GM10248 (cell line): ENCODE measurements at regions of chr3 and their contacts with region 1.

Region 1: DNA sequence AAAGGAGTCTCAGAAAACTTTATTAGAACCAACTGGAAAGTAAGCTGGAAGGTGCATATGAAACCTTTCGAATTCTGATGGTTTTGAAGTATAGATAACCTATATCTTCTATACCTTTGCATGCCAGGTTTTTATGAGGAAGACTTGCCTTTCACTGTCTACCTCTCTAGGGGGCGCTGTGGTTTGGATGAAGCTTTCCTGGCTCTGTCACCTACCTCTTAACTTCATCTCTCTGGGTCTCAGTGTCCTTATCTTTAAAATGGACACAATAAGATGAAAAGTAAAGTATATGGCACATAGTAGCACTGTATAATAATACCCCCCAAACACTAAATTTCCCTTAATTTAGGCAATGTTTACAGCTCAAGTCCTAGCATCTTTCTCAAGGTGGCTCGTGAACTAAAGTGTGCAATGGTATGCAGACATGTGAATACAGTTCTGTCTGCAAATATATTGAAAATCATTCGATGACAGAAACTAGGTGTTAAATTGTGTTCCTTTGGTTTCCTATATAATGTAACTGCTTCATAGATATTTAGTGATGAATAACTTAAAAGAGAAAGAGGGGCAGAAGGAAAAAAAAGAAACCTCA is 314.3 kb downstream of the CHST2 start:
- DNase-seq: peak; percentile 29
- CTCF ChIP-seq: peak; percentile 41

Region 2: GRCh38 chr3:143031327-143031726 is 402.6 kb before region 1 on chr3:
- CTCF ChIA-PET with region 1: no interaction called
- POLR2A ChIA-PET with region 1: no interaction called
- DNase-seq: no peak
- CTCF ChIP-seq: no peak

Region 3: DNA sequence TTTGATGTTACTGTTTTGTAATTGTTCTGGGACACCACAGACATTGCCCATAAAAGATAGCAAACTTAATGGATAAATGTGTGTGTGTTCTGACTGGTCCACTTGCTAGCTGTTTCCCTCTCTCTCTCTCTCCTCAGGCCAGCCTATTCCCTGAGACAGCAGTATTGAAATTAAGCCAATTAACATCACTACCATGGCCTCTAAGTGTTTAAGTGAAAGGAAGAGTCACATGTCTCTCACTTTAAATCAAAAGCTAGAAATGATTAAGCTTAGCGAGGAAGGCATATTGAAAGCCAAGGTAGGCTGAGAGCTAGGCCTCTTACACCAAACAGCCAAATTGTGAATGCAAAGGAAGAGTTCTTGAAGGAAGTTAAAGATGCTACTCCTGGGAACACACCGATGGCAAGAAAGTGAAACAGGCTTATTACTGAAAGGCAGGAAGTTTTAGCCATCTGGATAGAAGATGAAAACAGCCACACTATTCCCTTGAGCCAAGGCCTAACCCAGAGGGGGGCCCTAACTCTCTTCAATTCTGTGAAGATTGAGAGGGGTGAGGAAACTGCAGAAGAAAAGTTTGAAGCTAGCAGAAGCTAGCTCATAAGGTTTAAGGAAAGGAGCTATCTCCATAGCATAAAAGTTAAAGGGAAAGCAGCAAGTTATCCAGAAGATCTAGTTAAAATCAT is 19.2 kb before region 1 on chr3:
- CTCF ChIA-PET with region 1: interaction called, 16 read pairs
- POLR2A ChIA-PET with region 1: no interaction called
- DNase-seq: no peak
- CTCF ChIP-seq: no peak

Region 4: GRCh38 chr3:143421556-143421955 is 12.3 kb before region 1 on chr3:
- CTCF ChIA-PET with region 1: interaction called, 34 read pairs
- POLR2A ChIA-PET with region 1: no interaction called
- DNase-seq: no peak
- CTCF ChIP-seq: no peak

Region 5: GRCh38 chr3:143443851-143444331 is 10.0 kb after region 1 on chr3:
- CTCF ChIA-PET with region 1: interaction called, 57 read pairs
- POLR2A ChIA-PET with region 1: no interaction called
- DNase-seq: no peak
- CTCF ChIP-seq: no peak

Region 6: GRCh38 chr3:143551761-143552160 is 117.9 kb after region 1 on chr3:
- CTCF ChIA-PET with region 1: no interaction called
- POLR2A ChIA-PET with region 1: no interaction called
- DNase-seq: no peak
- CTCF ChIP-seq: no peak

Region 7: DNA sequence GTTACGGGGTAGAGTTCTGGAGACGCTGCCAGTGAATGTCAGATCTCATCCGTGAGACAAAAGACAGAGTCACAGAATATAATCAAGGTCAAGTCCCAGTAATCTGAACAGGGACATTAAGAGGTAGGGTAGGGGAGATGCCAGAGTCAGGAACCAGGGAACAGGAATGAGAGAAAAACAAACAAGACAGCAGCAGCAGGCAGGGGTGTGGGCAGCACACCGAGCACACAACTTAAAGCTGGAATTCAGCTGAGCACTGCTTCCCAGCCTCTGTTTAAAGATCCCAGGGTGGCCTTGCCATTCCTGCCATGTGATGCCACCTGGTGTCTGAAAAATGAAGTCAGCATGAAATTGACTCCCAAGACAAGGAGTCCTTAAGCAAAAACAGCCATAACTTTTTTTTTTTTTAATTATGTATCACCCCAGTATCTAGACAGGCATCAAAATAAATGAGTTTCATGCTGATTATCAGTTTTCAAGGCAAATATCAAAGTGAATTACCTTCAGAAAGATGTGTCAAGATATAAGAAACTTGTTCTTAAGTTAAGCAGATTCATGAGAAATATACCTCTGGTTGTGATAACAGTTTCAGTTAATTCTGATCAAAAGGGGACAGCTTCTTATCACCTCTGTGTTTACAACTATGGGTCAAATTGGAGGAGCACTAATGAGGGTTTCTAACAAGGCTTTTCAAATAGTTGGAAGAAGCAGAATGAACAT is 210.6 kb after region 1 on chr3:
- CTCF ChIA-PET with region 1: interaction called, 26 read pairs
- POLR2A ChIA-PET with region 1: no interaction called
- DNase-seq: peak; percentile 42
- CTCF ChIP-seq: peak; percentile 39

Region 8: DNA sequence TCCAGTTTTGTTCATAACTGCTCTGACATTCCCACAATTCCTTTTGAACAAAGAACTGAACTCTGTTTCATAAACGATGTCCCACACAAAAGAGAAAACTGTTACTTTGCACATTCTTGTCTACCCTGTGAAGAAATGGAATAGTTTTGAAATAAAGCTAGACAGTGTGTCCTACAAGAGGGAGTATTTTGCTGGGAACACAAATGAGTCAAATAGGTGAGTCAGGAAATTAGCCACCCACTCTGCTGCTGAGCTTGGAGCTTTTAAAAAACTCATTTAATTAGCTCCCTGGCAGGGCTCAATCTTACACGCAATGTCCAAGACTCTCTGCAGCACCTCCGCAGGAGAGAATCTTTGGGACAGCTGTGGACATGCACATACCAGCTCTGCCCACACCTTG is 221.0 kb after region 1 on chr3:
- CTCF ChIA-PET with region 1: interaction called, 13 read pairs
- POLR2A ChIA-PET with region 1: no interaction called
- DNase-seq: no peak
- CTCF ChIP-seq: no peak

Region 9: DNA sequence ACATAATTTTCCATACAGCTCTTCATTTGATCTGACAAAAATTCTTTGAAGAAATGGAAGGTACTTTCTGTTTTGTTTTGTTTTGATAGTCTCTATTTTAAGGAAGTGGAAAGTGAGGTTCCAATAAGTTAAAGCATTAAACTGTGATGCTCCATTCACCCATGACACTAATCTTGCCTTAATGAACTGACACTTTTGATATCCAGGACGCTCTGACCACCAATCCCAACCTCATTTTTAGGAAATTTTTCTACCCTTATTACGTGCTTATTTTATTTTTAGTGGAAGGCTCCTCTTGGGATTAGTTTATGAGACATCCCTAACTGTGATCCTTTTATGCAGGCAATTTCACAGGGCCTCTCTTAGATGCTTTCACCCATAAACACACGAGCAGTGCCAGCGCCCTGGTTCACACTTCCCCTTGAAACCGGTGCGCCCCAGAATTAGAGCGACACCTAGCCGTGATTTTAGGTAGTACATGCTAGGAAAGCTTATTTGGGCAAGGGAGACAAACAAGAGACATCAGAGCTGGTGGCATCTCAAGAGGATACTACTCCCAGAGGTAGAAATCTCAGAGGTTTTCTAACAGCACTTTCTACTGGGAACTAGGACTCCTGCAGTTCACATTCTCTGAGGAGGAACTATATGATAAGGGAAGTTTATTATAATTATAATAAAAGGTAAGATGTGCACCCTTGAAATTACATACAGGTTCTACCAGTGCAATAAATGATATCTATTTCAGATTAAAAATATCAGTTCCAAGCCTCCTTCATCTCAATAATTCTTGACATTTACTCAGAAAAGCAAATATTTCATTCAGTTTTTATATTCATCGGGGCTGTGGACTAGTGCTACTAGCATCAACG is 240.5 kb after region 1 on chr3:
- CTCF ChIA-PET with region 1: interaction called, 37 read pairs
- POLR2A ChIA-PET with region 1: no interaction called
- DNase-seq: peak; percentile 73
- CTCF ChIP-seq: peak; percentile 89

Region 10: GRCh38 chr3:143707848-143708247 is 274.0 kb after region 1 on chr3:
- CTCF ChIA-PET with region 1: no interaction called
- POLR2A ChIA-PET with region 1: no interaction called
- DNase-seq: no peak
- CTCF ChIP-seq: no peak

Region 11: GRCh38 chr3:143855183-143855582 is 421.3 kb after region 1 on chr3:
- CTCF ChIA-PET with region 1: no interaction called
- POLR2A ChIA-PET with region 1: no interaction called
- DNase-seq: no peak
- CTCF ChIP-seq: no peak